Naive thymus-derived CD4-positive, alpha-beta T cell (primary cell): ENCODE measurements at regions of chr16 and their contacts with region 1.

Region 1: DNA sequence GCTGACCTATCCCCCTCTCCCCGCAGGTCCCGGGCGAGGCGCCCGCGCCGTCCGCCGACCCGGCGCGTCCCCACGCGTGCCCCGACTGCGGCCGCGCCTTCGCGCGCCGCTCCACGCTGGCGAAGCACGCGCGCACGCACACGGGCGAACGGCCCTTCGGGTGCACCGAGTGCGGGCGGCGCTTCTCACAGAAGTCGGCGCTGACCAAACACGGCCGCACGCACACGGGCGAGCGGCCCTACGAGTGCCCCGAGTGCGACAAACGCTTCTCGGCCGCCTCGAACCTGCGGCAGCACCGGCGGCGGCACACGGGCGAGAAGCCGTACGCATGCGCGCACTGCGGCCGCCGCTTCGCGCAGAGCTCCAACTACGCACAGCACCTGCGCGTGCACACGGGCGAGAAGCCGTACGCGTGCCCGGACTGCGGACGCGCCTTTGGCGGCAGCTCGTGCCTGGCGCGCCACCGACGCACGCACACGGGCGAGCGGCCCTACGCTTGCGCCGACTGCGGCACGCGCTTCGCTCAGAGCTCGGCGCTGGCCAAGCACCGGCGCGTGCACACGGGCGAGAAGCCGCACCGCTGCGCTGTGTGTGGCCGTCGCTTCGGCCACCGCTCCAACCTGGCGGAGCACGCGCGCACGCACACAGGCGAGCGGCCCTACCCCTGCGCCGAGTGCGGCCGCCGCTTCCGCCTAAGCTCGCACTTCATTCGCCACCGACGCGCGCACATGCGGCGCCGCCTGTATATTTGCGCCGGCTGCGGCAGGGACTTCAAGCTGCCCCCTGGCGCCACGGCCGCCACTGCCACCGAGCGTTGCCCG is 10.3 kb downstream of the ZNF771 start:
- DNase-seq: peak; percentile 79 to 93 (median 88)
- ATAC-seq: peak; percentile 95
- H3K4me3 ChIP-seq: peak overlapping the region; percentile 76
- H3K4me3 Mint-ChIP-seq: peak overlapping the region; percentile 54 to 80 (median 70)
- H3K27ac ChIP-seq: peak overlapping the region; percentile 85
- H3K27ac Mint-ChIP-seq: peak overlapping the region in 7 of 9 donors; percentile 69 to 88 (median 81)
- H3K4me1 ChIP-seq: peaks cover 6 to 8% of the 10 kb centered on the region in 2 donors
- H3K4me1 Mint-ChIP-seq: peaks cover 12 to 31% (median 14%) of the 10 kb centered on the region in 7 donors
- H3K27me3 ChIP-seq: no peaks in the 10 kb centered on the region
- H3K27me3 Mint-ChIP-seq: no peaks in the 10 kb centered on the region

Region 2: DNA sequence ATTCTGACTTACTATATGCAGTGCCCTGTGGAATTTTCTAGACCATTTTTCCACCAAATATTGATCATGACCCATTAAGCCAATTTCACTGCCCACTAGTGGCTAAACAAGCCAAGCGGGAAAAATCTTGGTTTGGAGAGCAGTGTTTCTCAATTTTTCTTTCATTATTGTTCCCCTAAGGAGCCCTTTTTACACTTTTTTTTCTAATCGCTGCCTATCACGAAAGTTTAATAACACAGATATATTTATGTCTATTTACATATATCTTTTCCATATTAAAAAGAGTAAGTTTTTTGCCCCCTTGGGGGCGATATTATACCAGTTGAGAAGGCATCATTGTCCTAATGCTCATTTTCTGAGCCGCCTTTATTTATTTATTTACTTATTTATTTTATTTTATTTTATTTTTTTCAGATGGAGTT is 375.9 kb before region 1 on chr16:
- CTCF ChIA-PET with region 1: no interaction called
- POLR2A ChIA-PET with region 1: no interaction called
- intact Hi-C with region 1: no loop called
- DNase-seq: peak in 3 of 9 donors; percentile 40 to 44 (median 42)
- ATAC-seq: no peak
- H3K4me3 ChIP-seq: no peak overlapping the region
- H3K4me3 Mint-ChIP-seq: no peak overlapping the region
- H3K27ac ChIP-seq: no peak overlapping the region
- H3K27ac Mint-ChIP-seq: no peak overlapping the region
- H3K4me1 ChIP-seq: no peaks in the 10 kb centered on the region
- H3K4me1 Mint-ChIP-seq: peaks cover 0 to 7% (median 0%) of the 10 kb centered on the region in 7 donors
- H3K27me3 ChIP-seq: no peaks in the 10 kb centered on the region
- H3K27me3 Mint-ChIP-seq: peaks cover 0 to 21% (median 0%) of the 10 kb centered on the region in 5 donors

Region 3: DNA sequence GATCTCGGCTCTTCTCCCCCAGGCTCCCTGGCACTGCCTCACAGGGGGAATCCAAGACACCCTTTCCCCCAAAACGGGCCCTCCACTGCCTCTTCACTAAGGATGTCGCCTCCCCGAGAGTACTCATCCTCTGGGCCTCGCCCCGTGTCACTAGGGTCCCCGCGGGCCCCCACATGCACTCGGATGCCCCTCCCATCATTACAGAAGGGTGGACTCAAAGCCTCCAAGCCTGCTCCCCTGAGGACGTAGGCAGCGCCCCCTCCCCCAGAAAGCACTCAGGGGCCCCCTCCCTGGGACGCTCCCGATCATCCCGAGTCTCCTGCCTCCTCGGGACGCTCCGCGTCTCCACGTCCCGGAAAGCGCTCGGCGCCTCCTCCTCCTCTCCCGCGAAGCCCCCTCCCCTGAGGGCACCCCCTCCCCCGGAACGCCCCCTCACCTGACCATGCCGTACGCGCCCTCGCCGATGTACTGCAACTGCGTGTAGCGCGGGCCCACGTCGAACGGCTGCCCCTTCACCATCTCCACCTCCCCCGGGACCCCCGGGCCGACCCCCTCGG is 295.1 kb before region 1 on chr16:
- CTCF ChIA-PET with region 1: interaction called, 3 read pairs
- POLR2A ChIA-PET with region 1: interaction called, 4 read pairs
- intact Hi-C with region 1: loop called in 1 of 2 experiments (anchors 1 kb)
- DNase-seq: peak in 2 of 9 donors; percentile 19 to 35
- ATAC-seq: peak; percentile 2
- H3K4me3 ChIP-seq: peak overlapping the region; percentile 68
- H3K4me3 Mint-ChIP-seq: peak overlapping the region; percentile 82 to 94 (median 88)
- H3K27ac ChIP-seq: peak overlapping the region; percentile 89
- H3K27ac Mint-ChIP-seq: peak overlapping the region; percentile 75 to 93 (median 85)
- H3K4me1 ChIP-seq: peaks cover 6 to 13% of the 10 kb centered on the region in 2 donors
- H3K4me1 Mint-ChIP-seq: peaks cover 20 to 39% (median 27%) of the 10 kb centered on the region in 7 donors
- H3K27me3 ChIP-seq: no peaks in the 10 kb centered on the region
- H3K27me3 Mint-ChIP-seq: no peaks in the 10 kb centered on the region

Region 4: DNA sequence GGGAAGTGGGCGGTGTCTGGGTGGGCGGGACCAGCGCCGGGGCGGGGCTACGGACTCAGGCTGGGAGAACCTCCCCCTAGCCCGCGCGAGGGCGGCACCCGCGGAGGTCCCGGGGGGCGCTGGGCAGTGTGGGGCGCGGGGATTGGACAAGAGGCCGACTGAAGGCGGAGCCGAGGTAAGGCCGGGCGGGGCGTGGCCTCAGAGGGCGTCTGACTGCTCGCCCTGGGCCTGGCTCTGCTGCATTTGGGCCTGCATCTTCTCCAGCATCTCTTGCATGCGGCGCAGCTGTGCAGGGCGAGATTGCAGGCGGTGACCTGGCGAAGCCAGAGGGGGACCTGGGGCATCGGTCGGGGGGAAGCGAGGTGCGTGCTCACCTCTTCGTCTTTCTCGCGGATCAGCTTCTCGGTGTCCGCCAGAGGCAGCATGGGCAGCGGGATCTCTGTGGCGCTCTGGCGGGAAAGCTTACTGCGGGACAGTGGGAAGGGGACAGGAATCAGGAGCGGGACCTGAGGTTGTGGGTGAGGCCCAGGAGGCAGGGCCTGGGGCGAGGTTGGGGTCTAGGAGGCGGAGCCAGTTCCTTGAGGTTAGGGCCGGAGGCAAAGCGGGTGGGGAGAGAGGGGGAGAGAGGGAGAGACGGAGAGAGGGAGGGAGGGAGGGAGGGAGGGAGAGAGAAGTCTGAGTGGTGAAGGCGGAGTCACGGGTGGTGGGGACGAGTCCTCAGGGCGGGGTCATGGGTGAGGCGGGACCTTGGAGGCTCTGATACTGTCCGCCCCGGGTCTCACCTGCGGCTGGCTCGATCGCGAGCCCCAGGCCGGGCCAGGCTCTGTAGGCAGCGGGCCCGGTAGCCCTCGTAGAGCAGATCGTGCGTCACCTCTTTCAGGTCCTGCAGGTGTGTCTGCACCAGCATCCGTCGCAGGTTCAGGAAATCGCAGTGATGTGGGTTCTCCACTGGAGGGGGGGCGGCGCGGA is 39.2 kb before region 1 on chr16:
- CTCF ChIA-PET with region 1: interaction called, 4 read pairs
- POLR2A ChIA-PET with region 1: interaction called, 28 read pairs
- intact Hi-C with region 1: no loop called
- DNase-seq: peak; percentile 97 to 99 (median 99)
- ATAC-seq: peak; percentile 91
- H3K4me3 ChIP-seq: peak overlapping the region; percentile 88
- H3K4me3 Mint-ChIP-seq: peak overlapping the region; percentile 90 to 100 (median 97)
- H3K27ac ChIP-seq: peak overlapping the region; percentile 100
- H3K27ac Mint-ChIP-seq: peak overlapping the region; percentile 98 to 100 (median 100)
- H3K4me1 ChIP-seq: peaks cover 54 to 56% of the 10 kb centered on the region in 2 donors
- H3K4me1 Mint-ChIP-seq: peaks cover 32 to 61% (median 49%) of the 10 kb centered on the region in 7 donors
- H3K27me3 ChIP-seq: no peaks in the 10 kb centered on the region
- H3K27me3 Mint-ChIP-seq: no peaks in the 10 kb centered on the region

Region 5: GRCh38 chr16:30472328-30472942 is 54.7 kb after region 1 on chr16 and contains the start of gene ITGAL:
- CTCF ChIA-PET with region 1: no interaction called
- POLR2A ChIA-PET with region 1: interaction called, 12 read pairs
- intact Hi-C with region 1: no loop called
- DNase-seq: peak; percentile 41 to 89 (median 84)
- ATAC-seq: peak; percentile 89
- H3K4me3 ChIP-seq: peak within 1 kb of the TSS; percentile 74
- H3K4me3 Mint-ChIP-seq: peak within 1 kb of the TSS; percentile 83 to 100 (median 98)
- H3K27ac ChIP-seq: peak within 1 kb of the TSS; percentile 84
- H3K27ac Mint-ChIP-seq: peak within 1 kb of the TSS; percentile 88 to 98 (median 96)
- H3K4me1 ChIP-seq: peaks cover 60 to 63% of the 10 kb centered on the region in 2 donors
- H3K4me1 Mint-ChIP-seq: peaks cover 43 to 83% (median 57%) of the 10 kb centered on the region in 7 donors
- H3K27me3 ChIP-seq: no peaks in the 10 kb centered on the region
- H3K27me3 Mint-ChIP-seq: no peaks in the 10 kb centered on the region
- total RNA-seq, gene ITGAL: 258 to 629 (median 436) TPM

Region 6: GRCh38 chr16:30571695-30572600 is 154.2 kb after region 1 on chr16 and contains the start of gene ZNF688:
- CTCF ChIA-PET with region 1: no interaction called
- POLR2A ChIA-PET with region 1: interaction called, 11 read pairs
- intact Hi-C with region 1: no loop called
- DNase-seq: peak; percentile 74 to 99 (median 97)
- ATAC-seq: peak; percentile 89
- H3K4me3 ChIP-seq: peak within 1 kb of the TSS; percentile 88
- H3K4me3 Mint-ChIP-seq: peak within 1 kb of the TSS; percentile 87 to 98 (median 90)
- H3K27ac ChIP-seq: peak within 1 kb of the TSS; percentile 94
- H3K27ac Mint-ChIP-seq: peak within 1 kb of the TSS; percentile 92 to 98 (median 95)
- H3K4me1 ChIP-seq: peaks cover 36 to 38% of the 10 kb centered on the region in 2 donors
- H3K4me1 Mint-ChIP-seq: peaks cover 17 to 51% (median 39%) of the 10 kb centered on the region in 7 donors
- H3K27me3 ChIP-seq: no peaks in the 10 kb centered on the region
- H3K27me3 Mint-ChIP-seq: no peaks in the 10 kb centered on the region
- total RNA-seq, gene ZNF688: 8.8 to 24.3 (median 16.3) TPM